Heart right ventricle (tissue), 16 donors: ENCODE measurements at regions of chr11 and their contacts with region 1.

Region 1: GRCh38 chr11:121318848-121319834 is 26.6 kb downstream of the SC5D start:
- DNase-seq: peak in 1 of 2 donors; percentile 14
- ATAC-seq: peak in 6 of 8 donors; percentile 49 to 81 (median 66)
- H3K4me3 ChIP-seq: no peak overlapping the region
- H3K27ac ChIP-seq: no peak overlapping the region
- H3K4me1 ChIP-seq: peaks cover 0 to 3% (median 0%) of the 10 kb centered on the region in 9 donors
- H3K27me3 ChIP-seq: peaks cover 0 to 23% (median 11%) of the 10 kb centered on the region in 7 donors
- CTCF ChIP-seq: peak; percentile 46 to 80 (median 71)

Region 2: GRCh38 chr11:121446752-121447156 is 127.6 kb after region 1 on chr11:
- intact Hi-C with region 1: loop called in 6 of 10 experiments (anchors 5 to 10 kb)
- DNase-seq: no peak
- ATAC-seq: no peak
- H3K4me3 ChIP-seq: no peak overlapping the region
- H3K27ac ChIP-seq: peak overlapping the region in 1 of 10 donors; percentile 90
- H3K4me1 ChIP-seq: peaks cover 0 to 53% (median 0%) of the 10 kb centered on the region in 9 donors
- H3K27me3 ChIP-seq: peaks cover 0 to 14% (median 8%) of the 10 kb centered on the region in 7 donors
- CTCF ChIP-seq: peak in 2 of 9 donors; percentile 7 to 11

Region 3: GRCh38 chr11:121464352-121464946 is 145.3 kb after region 1 on chr11:
- intact Hi-C with region 1: loop called in 4 of 10 experiments (anchors 10 kb)
- DNase-seq: peak; percentile 57 to 63
- ATAC-seq: peak; percentile 77 to 91 (median 89)
- H3K4me3 ChIP-seq: no peak overlapping the region
- H3K27ac ChIP-seq: peak overlapping the region in 4 of 10 donors; percentile 28 to 71 (median 44)
- H3K4me1 ChIP-seq: peaks cover 3 to 64% (median 26%) of the 10 kb centered on the region in 9 donors
- H3K27me3 ChIP-seq: peaks cover 0 to 11% (median 0%) of the 10 kb centered on the region in 7 donors
- CTCF ChIP-seq: no peak

Region 4: DNA sequence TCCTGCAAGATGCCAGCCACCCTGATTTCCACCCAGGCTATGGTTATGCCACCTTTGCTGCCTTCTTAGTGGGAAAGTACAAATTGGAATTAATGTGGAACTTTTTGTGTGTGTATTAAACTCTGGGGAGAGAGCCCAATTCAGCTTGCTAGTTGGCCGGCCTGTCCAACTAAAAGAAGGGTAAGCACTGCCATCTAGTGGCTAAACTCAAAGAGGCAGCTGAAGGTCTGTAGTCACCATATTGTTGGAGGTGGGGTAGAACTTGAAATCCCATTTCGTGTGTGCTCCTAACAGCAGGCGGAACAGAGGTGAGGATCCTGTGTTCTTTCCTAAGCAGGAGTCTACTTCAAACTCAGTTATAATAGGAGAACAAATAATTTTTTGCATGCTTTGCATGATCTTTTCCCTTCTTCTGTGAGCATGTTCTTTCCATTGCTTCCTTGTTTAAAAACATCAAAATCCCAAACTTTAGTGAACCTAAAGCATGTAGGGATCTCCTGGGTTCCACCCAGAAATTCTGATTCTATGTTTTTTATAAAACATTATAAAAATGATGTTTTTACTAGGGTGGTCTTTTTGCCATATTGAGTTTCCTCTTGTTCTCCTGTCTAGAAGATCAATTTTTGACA is 272.4 kb after region 1 on chr11:
- intact Hi-C with region 1: loop called in 9 of 10 experiments (anchors 1 to 2 kb)
- DNase-seq: peak in 1 of 2 donors; percentile 76
- ATAC-seq: peak in 7 of 8 donors; percentile 74 to 85 (median 82)
- H3K4me3 ChIP-seq: no peak overlapping the region
- H3K27ac ChIP-seq: no peak overlapping the region
- H3K4me1 ChIP-seq: peaks cover 0 to 13% (median 0%) of the 10 kb centered on the region in 9 donors
- H3K27me3 ChIP-seq: no peaks in the 10 kb centered on the region
- CTCF ChIP-seq: peak; percentile 73 to 90 (median 85)